H1 (cell line): ENCODE measurements at regions of chr22 and their contacts with region 1.

Region 1: GRCh38 chr22:35231585-35232084 is 25.7 kb upstream of the HMGXB4 start:
- DNase-seq: peak; percentile 68 to 91
- H3K4me3 ChIP-seq: no peak overlapping the region
- H3K27ac ChIP-seq: no peak overlapping the region
- H3K4me1 ChIP-seq: peaks cover 0 to 3% (median 2%) of the 10 kb centered on the region in 4 experiments; a peak in 2 of 7 replicates
- H3K27me3 ChIP-seq: no peaks in the 10 kb centered on the region; a peak in 1 of 7 replicates
- CTCF ChIP-seq: peak; percentile 87 to 99 (median 98)
- EP300 ChIP-seq: no peak
- POLR2A ChIP-seq: no peak
- RAD21 ChIP-seq: peak; percentile 93 to 94

Region 2: DNA sequence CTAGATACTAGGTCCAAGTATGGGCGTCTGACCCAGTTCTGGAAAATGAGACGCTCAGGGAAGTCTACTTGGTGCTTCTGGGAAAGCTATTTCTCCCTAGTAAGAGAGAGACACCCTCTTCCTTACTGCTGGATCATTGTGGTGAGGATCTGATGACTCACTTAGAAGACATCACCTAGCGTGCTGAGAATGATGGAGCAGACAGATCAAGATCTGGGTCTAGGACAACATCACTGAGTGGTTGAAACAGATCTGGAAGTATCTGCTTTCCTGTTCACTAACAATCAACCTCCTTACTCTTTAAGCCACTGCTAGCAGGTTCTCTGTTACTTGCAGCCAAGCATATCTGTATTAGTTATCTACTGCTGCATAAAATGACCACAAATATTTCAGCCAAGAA is 12.6 kb before region 1 on chr22:
- CTCF ChIA-PET with region 1: interaction called, 12 read pairs
- POLR2A ChIA-PET with region 1: no interaction called
- DNase-seq: no peak
- H3K4me3 ChIP-seq: no peak overlapping the region
- H3K27ac ChIP-seq: no peak overlapping the region
- H3K4me1 ChIP-seq: no peaks in the 10 kb centered on the region
- H3K27me3 ChIP-seq: no peaks in the 10 kb centered on the region; a peak in 1 of 7 replicates
- CTCF ChIP-seq: no peak
- EP300 ChIP-seq: no peak
- POLR2A ChIP-seq: no peak
- RAD21 ChIP-seq: no peak

Region 3: GRCh38 chr22:35352214-35353111 is 120.8 kb after region 1 on chr22:
- CTCF ChIA-PET with region 1: no interaction called
- POLR2A ChIA-PET with region 1: no interaction called
- DNase-seq: peak in 1 of 2 experiments; percentile 76
- H3K4me3 ChIP-seq: no peak overlapping the region
- H3K27ac ChIP-seq: no peak overlapping the region
- H3K4me1 ChIP-seq: peaks cover 0 to 12% (median 5%) of the 10 kb centered on the region in 4 experiments; a peak in 5 of 7 replicates
- H3K27me3 ChIP-seq: peaks cover 0 to 4% (median 0%) of the 10 kb centered on the region in 4 experiments; a peak in 4 of 7 replicates
- CTCF ChIP-seq: peak; percentile 55 to 71 (median 65)
- EP300 ChIP-seq: no peak
- POLR2A ChIP-seq: no peak
- RAD21 ChIP-seq: peak; percentile 35 to 41